ENCODE measurements at regions of chr22 and their contacts with region 1.

Region 1: DNA sequence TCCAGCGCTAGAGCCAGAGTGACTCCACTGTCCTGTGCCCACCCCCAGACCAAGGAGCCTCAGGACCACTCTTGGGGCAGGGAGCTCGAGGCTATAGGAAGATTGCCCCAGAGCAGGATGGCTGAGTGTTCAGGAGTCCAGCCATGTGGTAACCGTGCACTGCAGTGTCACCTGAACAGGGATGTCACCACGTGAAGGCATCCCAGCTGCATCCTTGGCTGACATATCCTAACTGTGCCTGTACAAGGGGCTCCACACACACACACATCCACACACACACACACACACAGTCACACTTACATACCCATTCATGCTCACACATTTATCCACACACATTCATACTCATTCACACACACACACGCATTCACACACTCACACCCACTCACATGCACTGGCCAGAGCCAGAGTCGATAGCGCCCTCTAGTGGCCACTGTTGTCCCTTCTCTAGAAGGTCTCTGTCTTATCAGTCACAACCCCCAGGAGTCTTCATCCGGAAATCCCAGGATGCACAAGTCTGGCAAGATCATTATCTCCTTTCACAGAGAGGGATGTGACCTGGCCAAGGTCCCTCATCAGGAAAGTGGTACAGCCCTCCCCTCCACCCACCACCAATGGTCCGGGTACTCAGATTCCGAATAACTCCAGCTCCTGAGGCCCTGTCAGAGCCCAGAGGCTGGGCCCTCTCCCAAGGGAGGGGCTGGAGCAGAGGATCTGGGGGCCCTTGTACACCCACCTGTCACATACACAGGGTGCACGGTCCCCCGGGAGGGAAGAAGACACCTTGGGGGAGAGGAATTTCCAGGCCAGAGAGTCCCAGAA is 55.1 kb downstream of the IGLL5 start:
- DNase-seq: peak; percentile 62
- ATAC-seq: peak; percentile 75
- H3K4me3 Mint-ChIP-seq: peak overlapping the region; percentile 29
- H3K27ac Mint-ChIP-seq: peak overlapping the region; percentile 85
- H3K4me1 Mint-ChIP-seq: peaks cover 90% of the 10 kb centered on the region
- H3K27me3 Mint-ChIP-seq: no peaks in the 10 kb centered on the region
- CTCF ChIP-seq: peak; percentile 27

Region 2: DNA sequence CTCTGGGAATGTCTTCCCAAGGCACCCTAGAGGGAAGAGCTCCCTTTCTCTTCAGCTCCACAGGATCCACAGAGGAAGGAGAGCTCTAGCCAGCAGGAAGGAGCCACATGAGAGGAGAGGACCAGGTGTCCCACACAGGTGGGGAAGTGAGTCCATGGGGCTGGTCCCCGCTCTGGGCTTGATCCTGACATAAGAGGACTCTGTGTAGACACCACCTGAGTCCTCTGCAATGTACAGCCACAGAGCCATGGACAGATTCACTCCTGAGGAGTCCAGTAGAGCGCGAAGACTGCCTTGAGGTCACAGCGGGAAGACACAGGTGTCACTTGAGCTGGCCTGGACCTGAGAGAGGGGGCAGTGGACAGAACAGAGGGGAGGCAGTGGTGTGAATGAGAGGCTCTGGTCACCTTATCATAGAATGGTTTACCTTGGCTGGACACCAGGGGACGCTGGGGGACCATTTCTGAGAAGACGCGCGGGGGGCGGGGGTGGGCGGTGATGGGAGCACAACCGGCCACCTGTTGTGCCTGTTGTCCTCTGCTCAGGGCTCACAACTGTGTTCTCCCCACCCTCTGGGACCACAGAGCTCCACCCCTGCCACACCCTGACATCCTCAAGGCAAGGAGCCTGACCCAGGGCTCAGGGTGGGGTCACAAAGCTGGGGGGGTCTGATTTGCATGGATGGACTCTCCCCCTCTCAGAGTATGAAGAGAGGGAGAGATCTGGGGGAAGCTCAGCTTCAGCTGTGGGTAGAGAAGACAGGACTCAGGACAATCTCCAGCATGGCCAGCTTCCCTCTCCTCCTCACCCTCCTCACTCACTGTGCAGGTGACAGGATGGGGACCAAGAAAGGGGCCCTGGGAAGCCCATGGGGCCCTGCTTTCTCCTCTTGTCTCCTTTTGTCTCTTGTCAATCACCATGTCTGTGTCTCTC is 562.4 kb before region 1 on chr22:
- CTCF ChIA-PET with region 1: no interaction called
- POLR2A ChIA-PET with region 1: no interaction called
- intact Hi-C with region 1: loop called (anchors 10 kb)
- DNase-seq: peak; percentile 46
- ATAC-seq: peak; percentile 80
- H3K4me3 Mint-ChIP-seq: peak overlapping the region; percentile 61
- H3K27ac Mint-ChIP-seq: peak overlapping the region; percentile 86
- H3K4me1 Mint-ChIP-seq: peaks cover 79% of the 10 kb centered on the region
- H3K27me3 Mint-ChIP-seq: no peaks in the 10 kb centered on the region
- CTCF ChIP-seq: no peak

Region 3: GRCh38 chr22:22848364-22848866 is 94.3 kb before region 1 on chr22:
- CTCF ChIA-PET with region 1: interaction called, 53 read pairs
- POLR2A ChIA-PET with region 1: interaction called, 9 read pairs
- intact Hi-C with region 1: loop called (anchors 1 kb)
- DNase-seq: peak; percentile 62
- ATAC-seq: peak; percentile 67
- H3K4me3 Mint-ChIP-seq: no peak overlapping the region
- H3K27ac Mint-ChIP-seq: no peak overlapping the region
- H3K4me1 Mint-ChIP-seq: peaks cover 39% of the 10 kb centered on the region
- H3K27me3 Mint-ChIP-seq: peaks cover 10% of the 10 kb centered on the region
- CTCF ChIP-seq: peak; percentile 79

Region 4: DNA sequence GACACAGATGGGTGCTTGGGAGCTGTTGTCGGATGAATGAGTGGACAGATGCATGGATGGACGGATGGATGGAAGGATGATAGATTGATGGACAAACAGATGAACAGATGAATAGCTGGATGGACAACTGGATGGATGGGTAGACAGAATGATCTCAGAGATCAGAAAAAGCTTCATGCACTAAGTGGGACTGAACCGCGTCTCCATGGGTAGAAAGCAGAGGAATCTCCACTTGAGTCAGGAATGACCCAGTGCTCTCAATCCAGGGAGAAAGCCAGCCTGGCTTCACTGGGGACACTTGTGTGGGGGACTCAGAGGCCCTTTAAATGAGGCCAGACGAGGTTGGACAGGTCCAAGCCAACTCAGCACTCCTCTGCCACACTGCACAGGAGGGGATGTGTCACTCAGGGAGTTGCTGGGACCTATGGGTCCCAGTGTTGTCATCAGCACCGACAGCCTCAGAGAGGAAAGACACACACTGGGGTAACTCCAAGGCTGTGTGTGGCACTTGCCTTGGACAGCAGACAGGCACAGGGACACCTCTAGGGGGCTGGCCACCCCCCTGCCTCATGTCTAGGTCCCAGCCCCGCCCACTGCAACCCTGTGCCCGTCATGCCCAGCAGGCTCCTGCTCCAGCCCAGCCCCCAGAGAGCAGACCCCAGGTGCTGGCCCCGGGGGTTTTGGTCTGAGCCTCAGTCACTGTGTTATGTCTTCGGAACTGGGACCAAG is 49.5 kb before region 1 on chr22:
- CTCF ChIA-PET with region 1: no interaction called
- POLR2A ChIA-PET with region 1: interaction called, 701 read pairs
- intact Hi-C with region 1: no loop called
- DNase-seq: peak; percentile 27
- ATAC-seq: peak; percentile 53
- H3K4me3 Mint-ChIP-seq: peak overlapping the region; percentile 75
- H3K27ac Mint-ChIP-seq: peak overlapping the region; percentile 82
- H3K4me1 Mint-ChIP-seq: peaks cover 77% of the 10 kb centered on the region
- H3K27me3 Mint-ChIP-seq: peaks cover 8% of the 10 kb centered on the region
- CTCF ChIP-seq: no peak

Region 5: DNA sequence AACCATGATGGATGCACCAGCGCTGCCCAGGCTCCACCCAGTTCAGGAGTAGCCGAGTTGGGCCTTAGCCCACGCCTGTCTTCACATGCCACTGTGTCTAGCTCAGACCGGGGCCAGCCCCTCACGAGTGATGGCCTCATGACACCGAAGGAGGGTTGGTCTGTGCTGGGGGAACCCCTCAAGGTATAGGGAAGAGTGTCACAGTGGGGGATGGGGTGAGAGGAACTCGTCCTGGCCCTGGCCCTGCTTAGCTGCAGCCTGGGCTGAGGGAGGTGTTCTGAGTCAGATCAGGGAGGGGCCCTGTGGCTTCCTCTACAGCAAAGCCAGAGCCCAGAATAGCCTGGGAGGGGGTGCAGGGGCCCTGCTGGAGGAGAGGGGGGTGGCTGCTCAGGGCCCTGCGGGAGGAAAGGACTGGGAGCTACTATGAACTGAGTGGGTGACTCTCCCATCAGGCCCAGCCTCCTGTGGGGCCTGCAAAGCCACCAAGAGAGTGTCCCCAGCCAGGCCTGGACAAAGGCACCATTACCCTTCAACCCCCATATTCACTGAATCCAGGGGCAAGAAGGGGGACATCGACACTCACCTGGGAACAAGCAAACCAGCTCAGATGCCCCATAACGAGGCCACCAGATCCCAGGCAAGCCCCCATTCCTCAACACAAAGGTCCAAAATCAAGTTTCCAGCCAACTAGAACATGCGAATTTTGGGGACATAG is 13.9 kb before region 1 on chr22:
- CTCF ChIA-PET with region 1: interaction called, 20 read pairs
- POLR2A ChIA-PET with region 1: interaction called, 106 read pairs
- intact Hi-C with region 1: loop called (anchors 1 kb)
- DNase-seq: peak; percentile 71
- ATAC-seq: peak; percentile 91
- H3K4me3 Mint-ChIP-seq: peak overlapping the region; percentile 56
- H3K27ac Mint-ChIP-seq: peak overlapping the region; percentile 96
- H3K4me1 Mint-ChIP-seq: peaks cover 100% of the 10 kb centered on the region
- H3K27me3 Mint-ChIP-seq: no peaks in the 10 kb centered on the region
- CTCF ChIP-seq: no peak

Measured in activated B cell treated with CpG ODN at 0.5 μM for 24 hours (primary cell).